Spleen (tissue), 13 donors: ENCODE measurements at regions of chr1 and their contacts with region 1.

Region 1: GRCh38 chr1:174262349-174263241 is 103.3 kb downstream of the RABGAP1L start:
- DNase-seq: no peak
- H3K4me3 ChIP-seq: no peak overlapping the region
- H3K27ac ChIP-seq: no peak overlapping the region
- H3K4me1 ChIP-seq: peaks cover 0 to 20% (median 2%) of the 10 kb centered on the region in 6 donors
- H3K27me3 ChIP-seq: no peaks in the 10 kb centered on the region
- CTCF ChIP-seq: peak in 10 of 11 experiments; percentile 8 to 59 (median 45)
- POLR2A ChIP-seq: no peak

Region 2: GRCh38 chr1:173824331-173825081 is 438.1 kb before region 1 on chr1 and contains the starts of genes CENPL and DARS2:
- intact Hi-C with region 1: no loop called
- DNase-seq: peak; percentile 96
- H3K4me3 ChIP-seq: peak within 1 kb of the TSS; percentile 67 to 99 (median 76)
- H3K27ac ChIP-seq: peak within 1 kb of the TSS; percentile 92 to 97 (median 94)
- H3K4me1 ChIP-seq: peaks cover 11 to 75% (median 48%) of the 10 kb centered on the region in 6 donors
- H3K27me3 ChIP-seq: no peaks in the 10 kb centered on the region
- CTCF ChIP-seq: peak in 1 of 11 experiments; percentile 15
- POLR2A ChIP-seq: peak in 1 of 3 donors; percentile 25
- total RNA-seq, gene CENPL: 4.7 to 22.2 (median 7.9) TPM
- total RNA-seq, gene DARS2: 12.6 to 23.3 (median 18.2) TPM

Region 3: GRCh38 chr1:174051956-174052355 is 210.6 kb before region 1 on chr1:
- intact Hi-C with region 1: no loop called
- DNase-seq: no peak
- H3K4me3 ChIP-seq: no peak overlapping the region
- H3K27ac ChIP-seq: no peak overlapping the region
- H3K4me1 ChIP-seq: no peaks in the 10 kb centered on the region
- H3K27me3 ChIP-seq: no peaks in the 10 kb centered on the region
- CTCF ChIP-seq: no peak
- POLR2A ChIP-seq: no peak

Region 4: DNA sequence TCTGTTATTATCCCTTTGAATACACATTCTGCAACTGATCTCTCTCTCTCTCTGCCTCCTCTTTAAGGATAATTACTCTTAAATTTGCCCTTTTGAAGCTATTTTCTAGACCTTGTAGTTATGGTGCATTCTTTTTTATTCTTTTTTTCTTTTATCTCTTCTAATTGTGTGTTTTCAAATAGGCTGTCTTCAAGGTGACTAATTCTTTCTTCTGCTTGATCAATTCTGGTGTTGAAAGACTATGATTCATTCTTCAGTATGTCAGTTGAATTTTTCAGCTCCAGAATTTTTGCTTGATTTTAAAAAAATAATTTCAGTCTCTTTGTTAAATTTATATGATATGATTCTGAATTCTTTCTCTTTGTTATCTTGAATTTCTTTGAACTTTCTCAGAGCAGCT is 89.5 kb after region 1 on chr1:
- intact Hi-C with region 1: no loop called
- DNase-seq: no peak
- H3K4me3 ChIP-seq: no peak overlapping the region
- H3K27ac ChIP-seq: no peak overlapping the region
- H3K4me1 ChIP-seq: no peaks in the 10 kb centered on the region
- H3K27me3 ChIP-seq: no peaks in the 10 kb centered on the region
- CTCF ChIP-seq: no peak
- POLR2A ChIP-seq: no peak

Region 5: DNA sequence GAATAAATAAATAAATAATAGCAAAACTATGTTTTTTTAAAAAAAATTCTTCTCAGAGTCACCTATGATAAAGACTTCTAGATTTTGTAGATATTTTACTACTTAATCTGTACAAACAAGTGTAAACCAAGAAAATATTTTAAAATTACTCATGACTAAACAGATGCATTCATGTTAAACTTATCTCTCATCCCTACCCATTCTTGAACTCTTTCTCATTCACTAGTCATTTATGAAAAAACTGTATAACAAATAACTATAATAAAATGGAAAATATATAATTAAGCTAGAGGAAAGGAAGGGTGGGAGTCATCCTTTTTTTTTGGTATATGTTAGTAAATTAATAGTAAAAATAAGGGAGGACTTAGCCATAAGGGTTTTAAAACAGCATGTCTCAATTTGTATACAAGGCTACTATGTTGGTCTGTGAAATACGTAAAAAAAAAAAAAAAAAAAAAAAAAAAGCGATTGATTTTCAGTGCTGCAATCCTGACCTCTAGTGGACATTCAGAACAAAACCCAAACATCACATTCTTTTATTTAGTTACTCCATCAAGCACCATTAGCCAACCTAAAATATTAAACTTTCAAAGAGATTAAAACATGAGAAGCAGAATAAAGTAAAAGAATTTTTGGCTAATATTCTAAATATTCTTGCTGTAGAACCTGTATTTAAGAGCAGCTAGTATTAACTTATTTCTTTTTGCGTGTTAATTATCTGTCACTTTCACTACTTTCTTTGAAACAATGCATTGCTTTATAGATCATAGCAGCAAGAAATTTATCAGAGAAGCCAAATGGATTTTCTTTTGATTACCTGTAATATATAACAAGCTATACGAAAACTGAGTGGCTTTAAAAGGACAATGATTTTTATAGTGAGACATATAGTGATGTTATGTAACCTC is 481.3 kb after region 1 on chr1:
- intact Hi-C with region 1: loop called (anchors 5 kb)
- DNase-seq: no peak
- H3K4me3 ChIP-seq: no peak overlapping the region
- H3K27ac ChIP-seq: peak overlapping the region in 1 of 8 donors; percentile 73
- H3K4me1 ChIP-seq: peaks cover 0 to 34% (median 8%) of the 10 kb centered on the region in 6 donors
- H3K27me3 ChIP-seq: no peaks in the 10 kb centered on the region
- CTCF ChIP-seq: peak; percentile 35 to 74 (median 66)
- POLR2A ChIP-seq: no peak